ENCODE measurements at regions of chr1 and their contacts with region 1.

Region 1: GRCh38 chr1:111481387-111482221 is 7.8 kb downstream of the C1orf162 start:
- DNase-seq: peak; percentile 77
- ATAC-seq: peak; percentile 61
- H3K4me3 Mint-ChIP-seq: no peak overlapping the region
- H3K27ac Mint-ChIP-seq: peak overlapping the region; percentile 40
- H3K4me1 Mint-ChIP-seq: peaks cover 37% of the 10 kb centered on the region
- H3K27me3 Mint-ChIP-seq: no peaks in the 10 kb centered on the region

Region 2: GRCh38 chr1:111454859-111455641 is 26.6 kb before region 1 on chr1:
- CTCF ChIA-PET with region 1: interaction called, 12 read pairs
- POLR2A ChIA-PET with region 1: interaction called, 19 read pairs
- DNase-seq: peak; percentile 39
- ATAC-seq: peak; percentile 39
- H3K4me3 Mint-ChIP-seq: peak overlapping the region; percentile 66
- H3K27ac Mint-ChIP-seq: peak overlapping the region; percentile 91
- H3K4me1 Mint-ChIP-seq: peaks cover 71% of the 10 kb centered on the region
- H3K27me3 Mint-ChIP-seq: no peaks in the 10 kb centered on the region

Region 3: DNA sequence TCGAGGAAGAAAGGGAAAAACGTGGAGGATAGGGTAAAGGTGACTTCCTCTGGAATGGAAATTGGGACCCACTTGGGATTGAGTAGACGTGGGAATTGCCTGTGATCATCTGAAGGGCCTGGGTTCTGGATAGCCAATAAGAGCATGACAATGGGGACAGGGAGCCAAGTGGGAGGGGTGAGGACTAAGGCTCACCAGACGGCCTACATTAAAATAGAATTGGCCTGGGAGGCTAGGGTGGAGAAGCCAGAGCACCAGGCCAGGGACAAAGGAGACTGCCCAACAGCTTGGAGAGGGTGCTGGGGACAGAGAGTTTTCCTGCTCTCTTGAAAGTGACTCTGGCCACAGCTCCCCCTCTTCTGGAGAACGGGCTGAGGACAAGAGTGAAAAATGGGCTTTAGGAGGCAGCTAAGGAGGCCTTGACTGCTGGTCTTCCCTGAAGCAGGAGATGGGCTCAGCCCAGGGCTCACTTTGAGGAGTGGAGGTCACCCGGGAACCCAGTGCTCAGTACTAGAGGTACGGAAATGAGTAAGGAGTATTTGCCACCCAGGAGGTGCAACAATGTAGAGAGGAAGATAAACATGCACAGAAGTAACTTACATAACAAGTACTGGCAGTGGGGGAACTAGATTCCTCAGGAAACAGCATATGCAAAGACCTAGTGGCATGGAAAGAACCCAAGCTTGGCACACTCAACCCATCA is 238.8 kb after region 1 on chr1:
- CTCF ChIA-PET with region 1: interaction called, 11 read pairs
- POLR2A ChIA-PET with region 1: no interaction called
- DNase-seq: peak; percentile 18
- ATAC-seq: no peak
- H3K4me3 Mint-ChIP-seq: no peak overlapping the region
- H3K27ac Mint-ChIP-seq: peak overlapping the region; percentile 2
- H3K4me1 Mint-ChIP-seq: peaks cover 1% of the 10 kb centered on the region
- H3K27me3 Mint-ChIP-seq: no peaks in the 10 kb centered on the region

Region 4: GRCh38 chr1:111755331-111756123 is 273.9 kb after region 1 on chr1 and contains the start of gene DDX20:
- CTCF ChIA-PET with region 1: interaction called, 12 read pairs
- POLR2A ChIA-PET with region 1: interaction called, 15 read pairs
- DNase-seq: peak; percentile 94
- ATAC-seq: peak; percentile 89
- H3K4me3 Mint-ChIP-seq: peak within 1 kb of the TSS; percentile 93
- H3K27ac Mint-ChIP-seq: peak within 1 kb of the TSS; percentile 99
- H3K4me1 Mint-ChIP-seq: peaks cover 57% of the 10 kb centered on the region
- H3K27me3 Mint-ChIP-seq: no peaks in the 10 kb centered on the region
- total RNA-seq, gene DDX20: 18.1 to 18.9 TPM

Measured in activated CD8-positive, alpha-beta T cell treated with anti-CD3 and anti-CD28 coated beads, Interleukin-2, amount 10 ng/mL, durations not matched to agents 7 days and 5 days (primary cell).